HCT116 (cell line): ENCODE measurements at regions of chr14 and their contacts with region 1.

Region 1: DNA sequence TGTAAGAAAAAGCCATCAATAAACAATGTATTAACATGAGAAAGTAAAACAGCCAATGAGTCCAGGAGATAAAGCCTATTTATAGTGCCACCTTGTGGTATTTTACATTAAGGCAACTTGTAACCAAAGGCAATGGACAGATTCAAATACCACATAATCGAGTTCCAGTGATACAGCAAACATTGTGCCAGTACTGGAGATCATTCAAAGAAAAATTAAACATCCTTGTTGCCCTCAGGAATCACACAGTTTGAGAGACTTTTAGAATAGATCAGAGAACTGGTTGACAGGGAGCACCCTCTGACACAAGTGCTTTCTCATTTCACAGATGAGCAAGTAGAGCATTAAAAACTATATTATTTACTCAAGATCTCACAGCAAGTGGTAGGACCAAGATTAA is 98.1 kb downstream of the DDHD1 start:
- DNase-seq: peak; percentile 40
- ATAC-seq: peak; percentile 79
- H3K4me3 ChIP-seq: no peak overlapping the region
- H3K27ac ChIP-seq: no peak overlapping the region
- H3K4me1 ChIP-seq: no peaks in the 10 kb centered on the region
- H3K27me3 ChIP-seq: no peaks in the 10 kb centered on the region
- CTCF ChIP-seq: peak; percentile 56 to 83 (median 69); a peak in 5 of 6 replicates
- POLR2A ChIP-seq: no peak
- RAD21 ChIP-seq: peak; percentile 69

Region 2: GRCh38 chr14:52824507-52824906 is 230.5 kb before region 1 on chr14:
- CTCF ChIA-PET with region 1: interaction called, 4 read pairs
- POLR2A ChIA-PET with region 1: no interaction called
- RAD21 ChIA-PET with region 1: no interaction called
- intact Hi-C with region 1: loop called (anchors 1 kb)
- DNase-seq: no peak
- ATAC-seq: no peak
- H3K4me3 ChIP-seq: no peak overlapping the region
- H3K27ac ChIP-seq: no peak overlapping the region
- H3K4me1 ChIP-seq: 0 out of 4 replicates have a peak, but pooled peaks cover 0 to 2% of the 10 kb centered on the region in 2 experiments
- H3K27me3 ChIP-seq: no peaks in the 10 kb centered on the region
- CTCF ChIP-seq: no peak
- POLR2A ChIP-seq: no peak
- RAD21 ChIP-seq: no peak

Region 3: GRCh38 chr14:52923902-52924575 is 131.0 kb before region 1 on chr14:
- CTCF ChIA-PET with region 1: interaction called, 3 read pairs
- POLR2A ChIA-PET with region 1: no interaction called
- RAD21 ChIA-PET with region 1: no interaction called
- intact Hi-C with region 1: loop called (anchors 1 kb)
- DNase-seq: no peak
- ATAC-seq: peak; percentile 84
- H3K4me3 ChIP-seq: no peak overlapping the region
- H3K27ac ChIP-seq: no peak overlapping the region
- H3K4me1 ChIP-seq: peaks cover 0 to 28% of the 10 kb centered on the region in 2 experiments; a peak in 3 of 4 replicates
- H3K27me3 ChIP-seq: no peaks in the 10 kb centered on the region
- CTCF ChIP-seq: peak; percentile 18 to 27 (median 27); a peak in 3 of 6 replicates
- POLR2A ChIP-seq: no peak
- RAD21 ChIP-seq: peak; percentile 51

Region 4: DNA sequence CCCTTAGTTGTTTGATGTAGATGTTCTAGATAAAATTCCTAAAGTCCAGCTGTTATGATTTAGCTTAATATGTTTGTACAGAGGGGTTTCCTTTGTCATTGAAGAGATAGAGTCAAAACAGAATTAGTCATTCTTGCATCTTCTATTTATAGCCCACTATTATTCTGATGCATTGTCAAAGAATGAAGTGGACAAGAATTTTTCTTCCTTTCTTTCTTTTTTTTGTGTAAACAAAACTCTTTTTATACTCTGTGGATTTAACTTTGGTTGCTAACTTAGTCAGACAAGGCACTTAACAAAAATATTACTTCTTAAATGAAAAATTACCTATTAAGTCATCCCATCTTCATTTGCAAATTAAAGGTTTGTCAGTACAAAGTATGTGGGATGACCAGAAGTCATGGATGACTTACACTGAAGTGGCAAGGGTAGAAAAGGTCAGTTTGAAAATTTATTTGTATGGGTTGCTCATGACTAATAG is 313.7 kb after region 1 on chr14:
- CTCF ChIA-PET with region 1: no interaction called
- POLR2A ChIA-PET with region 1: no interaction called
- RAD21 ChIA-PET with region 1: no interaction called
- intact Hi-C with region 1: no loop called
- DNase-seq: no peak
- ATAC-seq: peak; percentile 65; the same call in 1 of the 2 replicates
- H3K4me3 ChIP-seq: no peak overlapping the region
- H3K27ac ChIP-seq: peak overlapping the region; percentile 33; the same call in 1 of the 2 replicates
- H3K4me1 ChIP-seq: peaks cover 14 to 18% of the 10 kb centered on the region in 2 experiments
- H3K27me3 ChIP-seq: no peaks in the 10 kb centered on the region
- CTCF ChIP-seq: no peak
- POLR2A ChIP-seq: no peak
- RAD21 ChIP-seq: no peak